BJ (cell line): ENCODE measurements at regions of chr11 and their contacts with region 1.

Region 1: GRCh38 chr11:119196833-119197483 is 9.2 kb upstream of the CBL start:
- DNase-seq: peak; percentile 35
- H3K4me3 ChIP-seq: no peak overlapping the region
- H3K27me3 ChIP-seq: no peaks in the 10 kb centered on the region
- CTCF ChIP-seq: peak; percentile 84

Region 2: DNA sequence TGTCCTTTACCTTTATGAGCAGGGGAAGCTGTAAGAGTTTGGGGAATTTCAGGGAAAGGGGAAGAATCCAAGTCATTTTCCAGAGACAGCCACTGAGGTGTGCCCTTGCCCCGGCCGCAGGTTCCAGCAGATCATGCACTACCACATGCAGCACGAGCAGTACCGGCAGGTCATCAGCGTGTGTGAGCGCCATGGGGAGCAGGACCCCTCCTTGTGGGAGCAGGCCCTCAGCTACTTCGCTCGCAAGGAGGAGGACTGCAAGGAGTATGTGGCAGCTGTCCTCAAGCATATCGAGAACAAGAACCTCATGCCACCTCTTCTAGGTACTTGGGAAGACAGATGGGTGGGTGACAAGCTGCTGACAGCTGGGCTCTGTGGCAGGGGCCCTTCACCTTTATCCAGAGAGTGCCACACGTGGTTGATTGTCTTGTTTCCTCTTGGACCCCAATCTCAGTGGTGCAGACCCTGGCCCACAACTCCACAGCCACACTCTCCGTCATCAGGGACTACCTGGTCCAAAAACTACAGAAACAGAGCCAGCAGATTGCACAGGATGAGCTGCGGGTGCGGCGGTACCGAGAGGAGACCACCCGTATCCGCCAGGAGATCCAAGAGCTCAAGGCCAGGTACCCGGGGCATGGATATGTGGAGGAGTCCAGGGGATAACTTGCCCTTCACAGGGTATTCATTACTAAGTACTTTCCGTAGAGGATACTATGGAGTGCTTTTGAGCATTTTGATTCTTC is 118.1 kb before region 1 on chr11:
- CTCF ChIA-PET with region 1: no interaction called
- POLR2A ChIA-PET with region 1: no interaction called
- DNase-seq: no peak
- H3K4me3 ChIP-seq: no peak overlapping the region
- H3K27me3 ChIP-seq: no peaks in the 10 kb centered on the region
- CTCF ChIP-seq: no peak

Region 3: DNA sequence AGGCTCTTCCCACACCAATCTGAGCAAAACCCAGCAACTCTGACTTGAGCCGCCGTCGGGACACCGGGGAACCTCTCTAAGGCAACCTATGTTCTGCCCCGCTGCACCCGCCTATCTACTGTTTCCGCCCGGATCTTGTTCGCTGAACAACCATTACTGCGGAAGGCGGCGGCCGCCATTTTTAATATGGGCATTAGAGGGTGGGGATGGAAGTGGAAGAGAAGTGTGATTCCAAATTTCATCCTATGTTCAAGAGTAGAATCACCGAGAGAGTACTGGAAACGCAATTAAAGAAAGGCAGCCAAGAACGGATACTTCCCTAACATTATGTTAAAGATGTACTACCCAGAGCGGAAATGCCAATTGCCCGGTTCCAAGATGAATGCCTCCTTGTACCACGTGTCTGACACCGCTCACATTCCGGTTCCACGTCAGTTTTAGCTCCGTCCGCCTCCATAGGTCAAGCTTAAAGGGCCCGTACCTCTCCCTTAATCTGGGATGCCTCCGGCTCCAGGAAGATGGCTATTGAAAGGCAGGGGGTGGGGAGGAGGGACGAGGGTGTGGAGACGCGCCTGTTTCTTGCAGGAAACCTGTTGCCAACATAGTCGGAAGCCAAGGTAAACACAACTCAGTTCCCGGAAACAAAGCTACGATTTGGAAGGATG is 95.1 kb before region 1 on chr11 and contains the start of gene DPAGT1:
- CTCF ChIA-PET with region 1: interaction called, 10 read pairs
- POLR2A ChIA-PET with region 1: no interaction called
- DNase-seq: peak; percentile 80
- H3K4me3 ChIP-seq: peak within 1 kb of the TSS; percentile 76
- H3K27me3 ChIP-seq: no peaks in the 10 kb centered on the region
- CTCF ChIP-seq: no peak
- polyA plus RNA-seq, gene DPAGT1: 67.4 and 75.6 TPM in 2 replicates

Region 4: DNA sequence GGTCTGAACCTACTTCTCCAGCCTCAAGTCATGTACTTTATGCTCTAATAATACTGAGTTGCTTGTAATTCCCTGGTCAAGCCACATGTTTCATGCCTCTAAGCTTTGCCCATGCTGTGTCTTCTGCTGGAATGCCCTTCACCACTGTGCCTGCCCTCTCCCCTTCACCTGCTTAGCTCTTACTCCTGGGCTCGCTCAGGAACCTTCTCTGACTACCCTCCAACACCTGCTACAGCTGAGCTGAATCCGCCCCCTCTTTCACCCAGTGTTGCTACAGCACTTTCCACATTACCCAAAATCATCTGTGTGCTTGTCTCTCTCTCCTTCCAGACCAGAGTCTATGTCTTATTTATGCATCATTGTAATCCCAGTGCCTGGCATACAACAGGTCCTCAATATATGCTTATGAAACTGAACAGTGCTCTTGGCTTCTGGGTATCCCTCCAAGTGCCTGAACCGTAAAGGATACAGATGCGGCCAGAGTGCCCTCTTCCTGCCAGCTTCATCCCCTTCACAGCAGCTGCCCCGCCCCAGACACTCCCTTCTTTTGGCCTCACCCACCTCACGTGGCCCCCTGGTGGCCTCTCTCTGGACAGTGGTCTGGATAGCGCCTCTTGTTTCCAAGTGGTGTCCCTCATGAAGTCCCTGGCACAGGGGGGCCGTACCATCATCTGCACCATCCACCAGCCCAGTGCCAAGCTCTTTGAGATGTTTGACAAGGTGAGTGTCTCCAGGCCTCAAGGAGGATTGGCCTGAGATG is 41.0 kb before region 1 on chr11:
- CTCF ChIA-PET with region 1: interaction called, 16 read pairs
- POLR2A ChIA-PET with region 1: no interaction called
- DNase-seq: no peak
- H3K4me3 ChIP-seq: no peak overlapping the region
- H3K27me3 ChIP-seq: peaks cover 13% of the 10 kb centered on the region
- CTCF ChIP-seq: peak; percentile 32; the same call in 1 of the 2 replicates

Region 5: GRCh38 chr11:119181677-119182412 is 15.1 kb before region 1 on chr11:
- CTCF ChIA-PET with region 1: interaction called, 15 read pairs
- POLR2A ChIA-PET with region 1: no interaction called
- DNase-seq: no peak
- H3K4me3 ChIP-seq: no peak overlapping the region
- H3K27me3 ChIP-seq: no peaks in the 10 kb centered on the region; the same call in 1 of the 2 replicates
- CTCF ChIP-seq: no peak

Region 6: DNA sequence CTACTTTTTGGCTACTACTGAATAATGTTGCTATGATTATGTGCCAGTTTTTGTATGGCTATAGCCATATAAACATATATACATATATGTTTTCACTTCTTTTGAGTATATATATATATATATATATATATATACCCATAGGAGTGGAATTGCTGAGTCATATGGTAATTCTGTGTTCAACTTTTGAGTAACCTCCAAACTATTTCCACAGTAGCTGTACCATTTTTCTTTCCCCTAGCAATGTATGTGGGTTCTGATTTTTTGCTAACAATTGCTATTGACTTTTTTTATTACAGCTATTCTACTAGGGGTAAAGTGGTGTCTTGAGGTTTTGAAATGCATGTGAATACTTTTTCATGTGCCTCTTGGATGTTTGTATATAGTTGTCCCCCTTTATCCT is 39.5 kb after region 1 on chr11:
- CTCF ChIA-PET with region 1: no interaction called
- POLR2A ChIA-PET with region 1: no interaction called
- DNase-seq: no peak
- H3K4me3 ChIP-seq: no peak overlapping the region
- H3K27me3 ChIP-seq: no peaks in the 10 kb centered on the region
- CTCF ChIP-seq: no peak